ENCODE measurements at regions of chr15 and their contacts with region 1.

Region 1: DNA sequence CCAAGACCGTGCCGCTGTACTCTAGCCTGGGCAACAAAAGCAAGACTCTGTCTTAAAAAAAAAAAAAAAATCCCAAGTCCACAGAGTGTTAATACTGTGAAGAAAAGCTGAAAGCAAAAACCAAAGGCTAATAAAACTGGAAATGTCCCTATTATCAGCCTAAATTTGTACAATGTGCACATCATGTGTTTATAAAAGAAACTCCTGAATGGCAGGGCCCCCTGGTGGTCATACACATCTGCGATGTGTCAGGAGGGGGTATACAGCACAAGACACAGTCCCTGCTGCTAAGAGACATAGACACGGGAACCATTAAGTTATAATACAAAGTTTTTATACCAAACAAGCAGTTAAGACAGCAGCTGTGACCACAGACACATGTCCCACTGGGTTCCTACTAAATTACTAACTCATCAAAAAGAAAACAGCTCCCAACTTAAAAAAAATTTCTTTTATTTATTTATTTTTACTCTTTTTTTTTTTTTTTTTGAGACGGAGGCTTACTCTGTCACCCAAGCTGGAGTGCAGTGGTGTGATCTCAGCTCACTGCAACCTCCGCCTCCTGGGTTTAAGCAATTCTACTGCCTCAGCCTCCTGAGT is 31.0 kb downstream of the IDH2 start:
- DNase-seq: peak in 7 of 10 donors; percentile 74 to 95 (median 79)

Region 2: DNA sequence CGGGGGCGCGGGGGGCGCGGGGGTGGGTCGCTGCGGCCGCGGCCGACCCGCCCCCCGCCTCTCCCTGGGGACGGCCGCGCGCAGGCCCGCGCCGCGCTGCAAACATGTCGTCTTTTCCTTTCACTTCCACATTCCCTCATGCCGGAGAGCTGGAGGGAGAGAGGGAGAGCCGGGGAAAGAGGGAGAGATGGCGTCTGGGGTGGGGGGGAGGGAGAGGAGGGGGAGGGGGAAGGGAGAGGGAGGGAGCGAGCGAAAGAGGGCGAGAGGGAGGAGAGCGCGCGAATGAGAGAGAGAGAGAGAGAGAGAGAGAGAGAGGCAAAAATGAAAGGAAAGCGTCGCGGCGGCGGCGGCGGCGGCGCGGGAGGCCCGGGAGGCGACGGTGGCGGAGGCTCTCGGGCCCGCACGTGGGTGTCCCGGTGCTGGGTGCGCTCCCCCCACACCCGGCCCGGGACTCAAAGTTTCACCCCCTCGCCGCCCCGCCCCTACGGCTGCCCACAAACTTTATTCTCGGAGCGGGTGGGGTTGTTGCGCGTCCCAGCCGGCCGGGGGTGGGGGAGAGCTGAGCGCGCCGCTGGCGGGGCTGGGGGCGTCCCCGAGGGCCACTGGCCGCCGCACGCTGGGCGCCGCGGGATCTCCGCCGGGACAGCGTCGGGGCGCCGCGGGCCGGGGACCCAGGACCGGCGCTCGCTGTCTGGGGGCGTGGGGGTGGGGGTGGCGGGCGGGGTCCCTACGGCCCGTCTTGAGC is 69.5 kb before region 1 on chr15:
- intact Hi-C with region 1: loop called (anchors 5 kb)
- DNase-seq: peak in 5 of 10 donors; percentile 18 to 87 (median 31)

Region 3: DNA sequence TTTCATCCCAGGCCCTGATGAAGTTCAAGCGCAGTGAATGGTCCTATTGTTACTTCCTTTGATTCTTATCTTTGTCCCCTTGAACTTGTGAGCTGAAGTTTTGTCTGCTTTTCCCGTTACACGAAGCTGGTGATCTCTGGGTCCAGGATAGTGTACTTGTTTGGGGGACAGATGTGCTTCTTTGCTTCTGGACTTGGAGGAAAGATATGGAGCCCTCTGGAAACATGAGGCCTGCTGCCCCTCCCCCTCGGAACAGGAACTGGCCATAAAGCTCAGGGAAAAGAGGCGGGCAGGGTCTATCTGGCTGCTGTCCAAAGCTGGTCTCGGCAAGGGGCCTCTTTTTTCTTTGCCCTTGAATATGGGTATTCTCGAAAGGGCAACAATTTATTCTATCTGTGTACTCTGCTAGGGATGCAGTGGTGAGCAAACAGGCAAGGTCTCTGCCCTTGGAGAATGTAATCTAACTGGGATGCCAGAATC is 16.6 kb before region 1 on chr15:
- intact Hi-C with region 1: no loop called
- DNase-seq: no peak

Region 4: DNA sequence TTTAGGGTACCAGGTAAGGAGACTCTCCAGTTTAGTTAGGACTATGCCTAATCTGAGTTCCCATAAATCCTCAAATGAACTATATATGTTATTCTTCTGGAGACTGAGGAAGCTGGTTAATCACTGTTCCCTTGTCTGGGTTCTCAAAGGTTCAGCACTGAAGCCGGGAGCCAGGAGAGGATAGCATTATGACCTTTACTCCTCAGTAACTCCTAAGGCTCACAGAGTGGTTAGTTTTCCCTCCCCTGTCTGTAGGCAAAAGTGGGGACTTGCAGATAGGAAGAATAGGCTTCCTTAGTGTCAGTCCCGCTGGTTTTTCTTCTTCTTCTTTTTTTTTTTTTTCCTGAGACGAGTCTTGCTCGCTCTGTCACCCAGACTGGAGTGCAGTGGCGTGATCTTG is 508.8 kb after region 1 on chr15:
- intact Hi-C with region 1: no loop called
- DNase-seq: no peak

Region 5: DNA sequence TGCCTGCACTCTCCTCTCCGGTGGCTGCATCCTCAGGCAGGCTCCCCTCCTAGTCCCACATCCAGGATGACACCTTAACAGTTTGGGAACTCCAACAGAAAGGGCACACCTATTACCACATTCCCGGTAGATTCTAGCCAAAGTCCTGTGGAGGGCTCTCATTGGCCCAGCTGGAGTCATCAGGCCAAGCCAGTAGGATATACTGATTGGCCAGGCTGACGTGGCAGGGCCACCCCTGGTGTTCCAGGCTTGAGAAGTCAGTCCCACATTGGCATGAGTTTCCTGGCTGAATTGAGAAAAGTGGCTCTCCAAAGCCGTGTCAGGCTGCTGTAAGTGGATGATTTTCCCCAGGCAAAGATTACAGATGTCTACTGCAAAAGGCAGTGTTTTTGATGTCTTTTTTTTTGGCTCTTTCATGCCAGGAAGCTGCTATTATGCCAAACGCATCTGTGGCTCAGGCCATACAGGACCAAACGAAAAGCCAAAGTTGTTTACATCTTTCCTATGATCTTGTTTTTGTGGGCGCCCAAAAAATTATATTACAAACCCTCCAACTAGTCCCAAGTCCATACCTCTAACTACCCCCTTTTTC is 639.2 kb after region 1 on chr15:
- intact Hi-C with region 1: no loop called
- DNase-seq: no peak

Region 6: DNA sequence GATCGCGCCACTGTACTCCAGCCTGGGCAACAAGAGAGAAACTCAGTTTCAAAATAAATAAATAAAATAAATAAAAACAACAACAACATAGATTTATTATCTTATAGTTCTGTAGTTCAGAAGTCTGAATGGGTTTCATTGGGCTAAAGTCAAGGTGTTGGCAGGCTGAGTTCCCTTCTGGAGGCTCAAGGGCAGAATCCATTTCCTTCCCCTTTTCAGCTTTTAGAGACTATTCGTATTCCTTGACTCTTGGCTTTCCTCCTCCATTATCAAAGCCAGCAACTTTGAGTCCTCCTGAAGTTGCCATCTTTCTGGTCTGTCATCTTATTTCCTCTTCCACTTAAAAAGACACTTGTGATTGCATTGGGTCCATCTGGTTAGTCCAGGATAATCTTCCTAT is 658.0 kb after region 1 on chr15:
- intact Hi-C with region 1: no loop called
- DNase-seq: no peak

Measured in posterior cingulate gyrus (tissue), 11 donors.